ENCODE measurements at regions of chr10 and their contacts with region 1.

Region 1: DNA sequence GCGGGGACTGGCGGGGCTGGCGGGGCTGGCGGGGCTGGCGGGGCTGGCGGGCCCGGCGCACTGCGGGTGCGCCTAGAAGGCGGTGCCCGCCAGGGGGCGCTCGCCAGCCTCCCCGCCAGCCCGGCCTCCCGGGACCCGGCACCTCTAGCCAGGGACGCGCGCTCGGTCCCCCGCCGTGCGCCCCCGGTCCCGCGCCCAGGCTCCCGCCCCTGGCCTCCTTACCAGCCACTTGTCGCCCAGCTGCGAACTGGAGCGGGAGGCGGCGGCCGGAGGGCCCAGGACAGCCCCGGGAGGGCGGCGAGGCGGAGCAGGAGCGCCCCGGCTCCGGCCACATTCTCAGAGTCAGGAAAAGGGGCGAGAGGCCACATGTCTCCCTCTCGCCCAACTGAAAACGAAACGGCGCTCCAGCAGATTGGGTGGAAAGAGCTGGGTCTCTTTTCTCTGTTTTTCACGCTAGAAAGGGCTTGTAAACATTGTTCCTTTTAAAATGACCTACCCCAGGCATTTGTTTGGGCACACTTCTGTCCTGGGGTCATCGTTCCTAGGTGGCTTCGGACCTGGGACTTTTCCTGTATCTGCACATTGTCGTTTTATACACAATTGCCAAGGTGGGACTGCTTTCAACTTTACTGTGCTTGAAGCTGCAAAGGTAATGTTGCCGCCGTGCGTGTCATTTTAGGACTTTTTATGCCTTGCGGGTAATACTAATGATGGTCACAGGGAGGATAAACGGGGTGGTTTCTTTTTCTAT is 378 bp upstream of the PRKCQ start:
- DNase-seq: peak; percentile 67 to 93 (median 86)
- ATAC-seq: peak; percentile 64
- H3K4me3 ChIP-seq: peak overlapping the region; percentile 78 to 89
- H3K4me3 Mint-ChIP-seq: peak overlapping the region; percentile 96
- H3K27ac ChIP-seq: peak overlapping the region; percentile 83 to 84
- H3K27ac Mint-ChIP-seq: peak overlapping the region; percentile 97
- H3K4me1 ChIP-seq: peaks cover 46% of the 10 kb centered on the region
- H3K4me1 Mint-ChIP-seq: peaks cover 68% of the 10 kb centered on the region
- H3K27me3 ChIP-seq: no peaks in the 10 kb centered on the region
- H3K27me3 Mint-ChIP-seq: no peaks in the 10 kb centered on the region
- CTCF ChIP-seq: peak; percentile 47

Region 2: DNA sequence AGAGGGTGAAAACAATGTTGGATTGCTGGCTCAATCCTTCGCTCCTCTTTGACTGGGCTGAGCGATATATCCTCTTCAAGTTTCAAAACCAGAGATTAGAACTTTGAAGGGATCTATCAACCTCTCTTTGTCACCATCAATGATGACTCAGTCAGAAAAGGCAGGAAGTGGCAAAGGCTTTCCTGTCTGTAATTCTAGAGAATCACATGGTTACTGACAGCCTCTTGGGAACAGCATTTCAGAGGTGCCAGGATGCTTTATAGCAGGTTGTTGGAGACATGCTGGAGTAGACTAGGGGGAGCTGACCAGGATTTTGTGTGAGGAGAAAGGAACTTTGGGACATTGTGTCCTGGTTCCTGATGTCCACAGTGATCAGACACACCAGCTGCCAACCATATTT is 81.7 kb before region 1 on chr10:
- CTCF ChIA-PET with region 1: interaction called, 6 read pairs
- POLR2A ChIA-PET with region 1: no interaction called
- intact Hi-C with region 1: loop called (anchors 1 to 5 kb)
- DNase-seq: peak in 7 of 9 experiments; percentile 42 to 89 (median 52)
- ATAC-seq: peak; percentile 72
- H3K4me3 ChIP-seq: no peak overlapping the region
- H3K4me3 Mint-ChIP-seq: peak overlapping the region; percentile 55
- H3K27ac ChIP-seq: peak overlapping the region; percentile 0 to 87
- H3K27ac Mint-ChIP-seq: peak overlapping the region; percentile 94
- H3K4me1 ChIP-seq: peaks cover 36% of the 10 kb centered on the region
- H3K4me1 Mint-ChIP-seq: peaks cover 31% of the 10 kb centered on the region
- H3K27me3 ChIP-seq: no peaks in the 10 kb centered on the region
- H3K27me3 Mint-ChIP-seq: no peaks in the 10 kb centered on the region
- CTCF ChIP-seq: no peak

Region 3: GRCh38 chr10:6542999-6543430 is 37.4 kb before region 1 on chr10:
- CTCF ChIA-PET with region 1: interaction called, 5 read pairs
- POLR2A ChIA-PET with region 1: interaction called, 21 read pairs
- intact Hi-C with region 1: loop called in 1 of 2 experiments (anchors 1 kb)
- DNase-seq: peak in 8 of 9 experiments; percentile 39 to 85 (median 66)
- ATAC-seq: peak; percentile 74
- H3K4me3 ChIP-seq: peak overlapping the region; percentile 33 to 40
- H3K4me3 Mint-ChIP-seq: peak overlapping the region; percentile 88
- H3K27ac ChIP-seq: peak overlapping the region; percentile 78 to 92
- H3K27ac Mint-ChIP-seq: peak overlapping the region; percentile 99
- H3K4me1 ChIP-seq: peaks cover 68% of the 10 kb centered on the region
- H3K4me1 Mint-ChIP-seq: peaks cover 78% of the 10 kb centered on the region
- H3K27me3 ChIP-seq: no peaks in the 10 kb centered on the region
- H3K27me3 Mint-ChIP-seq: no peaks in the 10 kb centered on the region
- CTCF ChIP-seq: no peak

Region 4: DNA sequence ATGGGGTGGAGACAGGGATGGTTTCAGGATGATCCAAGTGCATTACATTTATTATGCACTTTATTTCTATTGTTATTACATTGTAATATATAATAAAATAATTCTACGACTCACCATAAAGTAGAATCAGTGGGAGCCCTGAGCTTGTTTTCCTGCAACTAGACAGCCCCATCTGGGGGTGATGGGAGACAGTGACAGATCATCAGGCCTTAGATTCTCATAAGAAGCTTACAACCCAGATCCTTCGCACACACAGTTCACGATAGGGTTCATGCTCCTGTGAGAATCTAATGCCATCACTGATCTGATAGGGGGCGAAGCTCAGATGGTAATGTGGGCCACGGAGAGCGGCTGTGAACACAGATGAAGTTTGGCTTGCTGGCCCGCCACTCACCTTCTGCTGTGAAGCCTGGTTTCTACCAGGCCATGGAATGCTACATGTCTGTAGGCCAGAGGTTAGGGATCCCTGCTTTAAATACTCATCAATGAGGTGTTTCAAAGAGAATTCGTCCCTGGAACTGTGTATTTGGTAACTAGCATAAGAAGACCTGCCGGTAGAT is 20.9 kb after region 1 on chr10:
- CTCF ChIA-PET with region 1: interaction called, 179 read pairs
- POLR2A ChIA-PET with region 1: interaction called, 29 read pairs
- intact Hi-C with region 1: loop called (anchors 1 kb)
- DNase-seq: peak in 6 of 9 experiments; percentile 41 to 69 (median 54)
- ATAC-seq: peak; percentile 52
- H3K4me3 ChIP-seq: no peak overlapping the region
- H3K4me3 Mint-ChIP-seq: peak overlapping the region; percentile 40
- H3K27ac ChIP-seq: peak overlapping the region; percentile 21 to 45
- H3K27ac Mint-ChIP-seq: peak overlapping the region; percentile 92
- H3K4me1 ChIP-seq: peaks cover 67% of the 10 kb centered on the region
- H3K4me1 Mint-ChIP-seq: peaks cover 83% of the 10 kb centered on the region
- H3K27me3 ChIP-seq: no peaks in the 10 kb centered on the region
- H3K27me3 Mint-ChIP-seq: no peaks in the 10 kb centered on the region
- CTCF ChIP-seq: peak; percentile 63

Region 5: DNA sequence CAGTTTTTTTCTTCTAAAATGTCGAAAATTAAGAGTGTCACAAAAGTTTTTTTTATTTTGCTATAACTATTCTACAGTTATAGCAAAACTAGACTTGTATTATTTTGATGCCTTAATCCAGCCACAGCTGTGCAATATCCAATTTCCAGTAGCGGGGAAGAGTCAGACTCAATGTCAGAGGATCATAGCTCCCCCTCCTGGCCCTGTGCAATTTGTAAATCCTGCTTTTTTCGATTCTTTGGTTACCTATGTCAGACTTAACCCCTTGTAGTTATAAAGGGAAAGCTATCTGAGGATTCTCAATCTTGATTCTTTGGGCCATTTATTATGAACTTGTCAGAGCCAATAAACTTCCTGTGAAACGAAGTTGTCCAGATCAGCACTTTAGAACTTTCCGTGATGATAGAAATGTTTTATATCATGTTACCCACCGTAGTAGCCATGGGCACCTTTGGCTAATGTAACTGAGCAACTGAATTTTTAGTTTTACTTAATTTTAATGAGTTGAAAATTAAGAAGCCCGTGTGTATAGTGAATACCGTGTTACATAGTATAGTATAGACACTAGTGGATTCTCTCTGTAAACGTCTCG is 87.3 kb after region 1 on chr10:
- CTCF ChIA-PET with region 1: interaction called, 6 read pairs
- POLR2A ChIA-PET with region 1: interaction called, 3 read pairs
- intact Hi-C with region 1: loop called in 1 of 2 experiments (anchors 5 kb)
- DNase-seq: peak in 3 of 9 experiments; percentile 36 to 56 (median 40)
- ATAC-seq: no peak
- H3K4me3 ChIP-seq: no peak overlapping the region
- H3K4me3 Mint-ChIP-seq: no peak overlapping the region
- H3K27ac ChIP-seq: no peak overlapping the region
- H3K27ac Mint-ChIP-seq: no peak overlapping the region
- H3K4me1 ChIP-seq: peaks cover 13% of the 10 kb centered on the region
- H3K4me1 Mint-ChIP-seq: peaks cover 18% of the 10 kb centered on the region
- H3K27me3 ChIP-seq: no peaks in the 10 kb centered on the region
- H3K27me3 Mint-ChIP-seq: no peaks in the 10 kb centered on the region
- CTCF ChIP-seq: peak; percentile 44

Region 6: DNA sequence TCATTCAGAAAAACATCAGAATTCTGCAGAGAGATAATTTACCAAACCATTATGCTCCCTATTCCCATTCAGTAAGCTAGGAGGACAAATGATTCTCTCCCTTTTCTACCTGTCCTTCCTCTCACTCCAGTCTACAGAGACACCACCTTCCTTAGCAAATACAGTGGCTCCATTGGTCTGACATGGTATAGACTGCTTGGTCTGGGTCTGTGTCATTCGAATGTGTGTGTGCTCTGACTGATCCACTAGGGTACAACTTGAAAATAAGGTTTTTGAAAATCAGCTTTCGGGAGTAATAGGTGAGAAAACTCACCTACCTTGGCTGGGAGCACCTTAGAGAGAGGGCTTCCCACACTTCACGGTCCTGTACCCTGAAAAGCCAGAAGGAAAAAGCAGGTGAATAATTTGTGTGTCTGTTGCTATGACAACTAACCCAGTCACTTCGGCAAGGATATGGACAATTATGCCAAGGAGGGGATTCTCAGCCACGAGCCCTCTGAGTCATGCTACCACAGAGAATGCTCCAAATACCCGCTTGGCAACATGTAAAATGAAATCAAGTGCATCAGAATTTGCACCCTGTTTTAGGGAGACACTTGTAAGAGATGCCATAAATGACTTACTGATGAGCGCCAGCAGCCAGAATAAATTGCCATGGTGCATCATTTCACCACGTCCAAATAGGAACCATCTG is 114.1 kb after region 1 on chr10:
- CTCF ChIA-PET with region 1: no interaction called
- POLR2A ChIA-PET with region 1: no interaction called
- intact Hi-C with region 1: no loop called
- DNase-seq: no peak
- ATAC-seq: no peak
- H3K4me3 ChIP-seq: no peak overlapping the region
- H3K4me3 Mint-ChIP-seq: no peak overlapping the region
- H3K27ac ChIP-seq: no peak overlapping the region
- H3K27ac Mint-ChIP-seq: no peak overlapping the region
- H3K4me1 ChIP-seq: no peaks in the 10 kb centered on the region
- H3K4me1 Mint-ChIP-seq: no peaks in the 10 kb centered on the region
- H3K27me3 ChIP-seq: no peaks in the 10 kb centered on the region
- H3K27me3 Mint-ChIP-seq: peaks cover 15% of the 10 kb centered on the region
- CTCF ChIP-seq: no peak